ENCODE measurements at regions of chr13 and their contacts with region 1.

Region 1: DNA sequence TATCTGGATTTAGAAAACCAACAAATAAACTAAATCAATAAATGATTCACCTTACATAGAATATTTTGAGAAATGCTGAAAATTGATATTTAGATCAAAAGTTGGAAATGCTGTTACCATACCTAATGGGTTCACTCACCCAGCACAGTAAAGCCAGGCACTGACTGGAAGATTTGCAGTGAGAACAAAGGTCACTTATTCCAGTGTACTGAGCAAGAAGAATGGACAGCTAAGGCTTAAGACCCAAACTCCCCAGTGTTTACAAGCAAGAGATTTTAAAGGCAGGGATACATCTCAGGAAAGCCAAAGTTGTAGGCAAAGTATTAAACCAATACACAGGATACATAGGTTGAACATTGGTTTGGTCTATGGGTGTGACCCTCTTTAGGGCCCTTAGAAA is 523.9 kb upstream of the PCDH9 start:
- DNase-seq: no peak
- ATAC-seq: no peak
- H3K4me3 ChIP-seq: no peak overlapping the region
- H3K27ac ChIP-seq: no peak overlapping the region
- H3K4me1 ChIP-seq: no peaks in the 10 kb centered on the region
- H3K27me3 ChIP-seq: no peaks in the 10 kb centered on the region
- CTCF ChIP-seq: no peak

Region 2: GRCh38 chr13:67855741-67856238 is 101.8 kb after region 1 on chr13:
- CTCF ChIA-PET with region 1: no interaction called
- POLR2A ChIA-PET with region 1: no interaction called
- in situ Hi-C with region 1: no loop called
- intact Hi-C with region 1: no loop called
- DNase-seq: no peak
- ATAC-seq: no peak
- H3K4me3 ChIP-seq: no peak overlapping the region
- H3K27ac ChIP-seq: no peak overlapping the region
- H3K4me1 ChIP-seq: no peaks in the 10 kb centered on the region; the same call in 1 of the 2 replicates
- H3K27me3 ChIP-seq: no peaks in the 10 kb centered on the region
- CTCF ChIP-seq: no peak

Region 3: GRCh38 chr13:68940049-68940448 is 1186.0 kb after region 1 on chr13:
- CTCF ChIA-PET with region 1: interaction called, 12 read pairs
- POLR2A ChIA-PET with region 1: no interaction called
- in situ Hi-C with region 1: no loop called
- intact Hi-C with region 1: no loop called
- DNase-seq: no peak
- ATAC-seq: no peak
- H3K4me3 ChIP-seq: no peak overlapping the region
- H3K27ac ChIP-seq: no peak overlapping the region
- H3K4me1 ChIP-seq: no peaks in the 10 kb centered on the region
- H3K27me3 ChIP-seq: no peaks in the 10 kb centered on the region
- CTCF ChIP-seq: no peak